WTC11 (cell line): ENCODE measurements at regions of chr13 and their contacts with region 1.

Region 1: GRCh38 chr13:96072392-96072791 is 17.5 kb upstream of the HS6ST3 start:
- DNase-seq: peak; percentile 38
- ATAC-seq: peak; percentile 97
- H3K4me3 Mint-ChIP-seq: no peak overlapping the region
- H3K27ac Mint-ChIP-seq: no peak overlapping the region
- H3K4me1 Mint-ChIP-seq: peaks cover 12% of the 10 kb centered on the region
- H3K27me3 Mint-ChIP-seq: no peaks in the 10 kb centered on the region
- CTCF ChIP-seq: no peak

Region 2: GRCh38 chr13:95982144-95982543 is 90.2 kb before region 1 on chr13:
- CTCF ChIA-PET with region 1: no interaction called
- POLR2A ChIA-PET with region 1: no interaction called
- DNase-seq: no peak
- ATAC-seq: no peak
- H3K4me3 Mint-ChIP-seq: no peak overlapping the region
- H3K27ac Mint-ChIP-seq: no peak overlapping the region
- H3K4me1 Mint-ChIP-seq: peaks cover 19% of the 10 kb centered on the region
- H3K27me3 Mint-ChIP-seq: no peaks in the 10 kb centered on the region
- CTCF ChIP-seq: no peak

Region 3: DNA sequence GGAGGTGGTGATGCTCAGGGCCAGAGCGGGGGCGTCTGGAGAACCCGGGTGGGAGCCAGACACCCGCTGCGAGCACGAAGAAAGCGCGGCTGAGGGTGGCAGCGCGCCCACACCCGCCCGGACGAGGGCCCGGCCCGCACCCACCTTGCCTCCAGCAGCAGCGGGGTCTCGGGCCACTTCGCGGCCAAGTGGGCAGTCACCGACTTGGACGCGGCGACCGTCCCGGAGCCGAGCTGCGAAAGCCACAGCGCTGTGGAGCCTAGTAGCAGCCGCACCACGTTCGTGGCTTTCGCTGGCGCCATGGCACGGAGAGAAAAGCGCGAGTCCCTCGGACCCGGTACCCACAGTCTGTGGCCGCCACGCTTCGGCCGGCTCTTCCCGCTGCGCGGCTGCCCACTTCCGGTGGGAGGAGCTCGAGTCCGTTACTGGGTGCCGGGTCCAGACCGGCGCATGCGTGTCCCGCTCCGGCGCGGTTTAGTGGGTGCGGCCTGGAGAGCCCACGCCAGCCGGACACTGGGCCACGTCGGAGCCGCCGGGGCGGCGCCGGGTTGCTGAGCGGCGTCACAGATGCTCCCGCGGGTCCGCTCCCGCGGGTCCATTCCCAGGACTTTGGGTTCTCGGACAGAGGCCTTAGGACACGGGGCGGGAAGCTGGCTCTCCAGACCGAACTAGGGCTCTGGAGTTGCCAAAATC is 19.2 kb before region 1 on chr13 and contains the start of gene UGGT2:
- CTCF ChIA-PET with region 1: interaction called, 10 read pairs
- POLR2A ChIA-PET with region 1: no interaction called
- DNase-seq: peak; percentile 80
- ATAC-seq: peak; percentile 95
- H3K4me3 Mint-ChIP-seq: peak within 1 kb of the TSS; percentile 91
- H3K27ac Mint-ChIP-seq: peak within 1 kb of the TSS; percentile 94
- H3K4me1 Mint-ChIP-seq: peaks cover 17% of the 10 kb centered on the region
- H3K27me3 Mint-ChIP-seq: no peaks in the 10 kb centered on the region
- CTCF ChIP-seq: no peak
- total RNA-seq, gene UGGT2: 31.1 to 32.3 TPM (median 32.0 TPM) in 3 replicates

Region 4: DNA sequence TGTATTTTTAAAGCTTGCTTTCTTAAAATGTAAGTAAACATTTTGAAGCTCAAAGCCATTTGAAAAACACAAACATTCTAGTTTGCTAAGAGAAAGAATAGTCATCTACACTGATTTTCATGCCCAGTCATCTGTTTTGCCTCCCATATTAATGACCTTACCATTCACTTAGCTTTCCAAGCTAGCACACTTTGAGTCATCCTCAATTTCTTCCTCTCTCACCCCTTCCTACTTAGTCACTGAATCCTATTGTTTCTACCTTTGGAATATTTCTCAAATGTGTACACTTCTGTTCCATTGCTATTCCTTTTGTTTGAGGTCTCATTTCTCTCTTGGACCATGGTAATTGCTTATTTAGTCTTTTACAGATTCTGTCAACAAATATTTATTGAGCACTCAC is 10.2 kb after region 1 on chr13:
- CTCF ChIA-PET with region 1: interaction called, 12 read pairs
- POLR2A ChIA-PET with region 1: no interaction called
- DNase-seq: no peak
- ATAC-seq: no peak
- H3K4me3 Mint-ChIP-seq: no peak overlapping the region
- H3K27ac Mint-ChIP-seq: no peak overlapping the region
- H3K4me1 Mint-ChIP-seq: peaks cover 27% of the 10 kb centered on the region
- H3K27me3 Mint-ChIP-seq: peaks cover 4% of the 10 kb centered on the region; the same call in 1 of the 2 replicates
- CTCF ChIP-seq: no peak

Region 5: DNA sequence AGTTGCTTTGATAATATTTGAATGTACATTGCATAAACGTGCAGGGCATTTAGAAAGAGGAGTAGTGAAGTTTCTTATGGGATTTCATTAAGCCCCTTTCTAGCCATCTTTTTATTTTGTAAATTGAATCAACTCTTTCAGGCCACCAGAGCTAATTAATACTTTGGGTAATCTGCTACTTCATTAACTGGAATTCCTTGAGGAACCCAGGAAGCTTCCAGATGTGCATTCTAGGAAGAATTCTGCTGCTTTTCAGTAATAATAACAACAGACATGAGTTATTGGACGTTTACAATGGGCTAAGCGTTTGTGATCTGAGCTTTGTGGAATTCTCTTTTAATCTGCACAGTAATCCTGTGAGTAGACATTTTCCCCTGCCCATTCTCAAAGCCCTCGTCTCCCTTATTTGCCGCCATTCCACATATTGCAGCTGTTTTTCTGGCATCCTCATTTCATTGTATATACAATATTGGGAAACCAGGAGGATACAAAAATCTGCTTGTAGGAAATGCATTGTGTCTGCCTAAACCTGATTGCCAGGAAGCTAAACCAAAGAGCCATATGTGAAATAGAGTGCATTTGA is 121.4 kb after region 1 on chr13:
- CTCF ChIA-PET with region 1: no interaction called
- POLR2A ChIA-PET with region 1: no interaction called
- DNase-seq: no peak
- ATAC-seq: no peak
- H3K4me3 Mint-ChIP-seq: no peak overlapping the region
- H3K27ac Mint-ChIP-seq: no peak overlapping the region
- H3K4me1 Mint-ChIP-seq: no peaks in the 10 kb centered on the region
- H3K27me3 Mint-ChIP-seq: no peaks in the 10 kb centered on the region
- CTCF ChIP-seq: no peak

Region 6: DNA sequence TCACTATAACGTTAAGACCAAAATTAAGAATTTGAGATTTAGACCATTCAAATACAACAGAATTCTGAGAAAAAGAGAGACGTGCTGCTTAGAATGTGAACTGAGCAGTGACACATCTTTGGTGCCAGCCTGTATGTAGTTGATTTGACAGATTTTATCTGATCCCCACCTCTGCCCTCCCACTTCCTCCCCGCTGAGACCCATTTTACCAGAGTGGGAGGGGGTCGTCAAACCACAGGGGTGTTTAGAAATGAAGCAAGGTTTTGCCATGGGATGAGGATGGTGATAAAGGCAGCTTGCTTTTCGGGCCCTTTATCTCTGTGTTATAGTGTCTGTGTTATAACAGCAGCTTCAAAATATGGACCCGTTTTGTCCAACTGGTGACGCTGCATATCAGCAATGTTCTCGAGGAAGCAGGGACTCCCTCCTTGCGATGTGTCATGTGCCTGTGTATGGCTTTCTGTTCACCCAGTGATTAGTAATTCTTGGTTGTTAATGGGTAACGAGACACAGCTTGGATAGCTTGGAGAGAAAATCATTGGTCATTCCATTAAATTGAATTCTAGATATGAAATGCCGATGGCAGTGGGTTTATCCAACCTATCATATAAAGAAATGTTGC is 142.5 kb after region 1 on chr13:
- CTCF ChIA-PET with region 1: no interaction called
- POLR2A ChIA-PET with region 1: no interaction called
- DNase-seq: no peak
- ATAC-seq: no peak
- H3K4me3 Mint-ChIP-seq: no peak overlapping the region
- H3K27ac Mint-ChIP-seq: no peak overlapping the region
- H3K4me1 Mint-ChIP-seq: no peaks in the 10 kb centered on the region
- H3K27me3 Mint-ChIP-seq: no peaks in the 10 kb centered on the region
- CTCF ChIP-seq: no peak

Region 7: DNA sequence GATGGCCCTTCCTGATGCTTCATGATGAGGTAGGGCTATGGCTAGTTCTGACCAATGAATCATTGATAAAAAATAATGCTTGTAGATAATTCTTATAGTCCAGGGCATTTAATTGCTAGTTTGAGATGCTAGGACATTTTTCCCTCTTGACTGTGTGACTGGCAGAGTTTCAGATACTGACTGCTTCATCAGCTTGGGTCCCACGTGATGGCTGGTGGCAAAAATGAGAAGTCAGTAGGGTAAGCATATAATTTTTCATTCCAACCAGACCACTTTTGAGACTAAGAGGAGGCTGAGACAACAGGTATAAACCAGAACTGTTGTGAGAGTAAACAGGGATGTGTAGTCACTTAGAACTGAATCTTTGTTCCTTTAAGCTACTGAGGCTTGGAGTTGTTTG is 200.8 kb after region 1 on chr13:
- CTCF ChIA-PET with region 1: no interaction called
- POLR2A ChIA-PET with region 1: no interaction called
- DNase-seq: no peak
- ATAC-seq: no peak
- H3K4me3 Mint-ChIP-seq: no peak overlapping the region
- H3K27ac Mint-ChIP-seq: no peak overlapping the region
- H3K4me1 Mint-ChIP-seq: peaks cover 12% of the 10 kb centered on the region
- H3K27me3 Mint-ChIP-seq: no peaks in the 10 kb centered on the region
- CTCF ChIP-seq: no peak